B cell (primary cell): ENCODE measurements at regions of chr12 and their contacts with region 1.

Region 1: GRCh38 chr12:123483602-123484248 is 25.8 kb downstream of the SNRNP35 start:
- DNase-seq: no peak
- ATAC-seq: no peak
- H3K4me3 ChIP-seq: no peak overlapping the region
- H3K4me3 Mint-ChIP-seq: no peak overlapping the region
- H3K27ac ChIP-seq: no peak overlapping the region
- H3K27ac Mint-ChIP-seq: peak overlapping the region; percentile 4
- H3K4me1 ChIP-seq: peaks cover 4 to 9% of the 10 kb centered on the region in 2 donors
- H3K4me1 Mint-ChIP-seq: peaks cover 16% of the 10 kb centered on the region
- H3K27me3 ChIP-seq: no peaks in the 10 kb centered on the region
- H3K27me3 Mint-ChIP-seq: no peaks in the 10 kb centered on the region
- CTCF ChIP-seq: no peak

Region 2: GRCh38 chr12:123502163-123502704 is 18.5 kb after region 1 on chr12:
- CTCF ChIA-PET with region 1: no interaction called
- POLR2A ChIA-PET with region 1: interaction called, 13 read pairs
- intact Hi-C with region 1: no loop called
- DNase-seq: no peak
- ATAC-seq: no peak
- H3K4me3 ChIP-seq: no peak overlapping the region
- H3K4me3 Mint-ChIP-seq: no peak overlapping the region
- H3K27ac ChIP-seq: no peak overlapping the region
- H3K27ac Mint-ChIP-seq: no peak overlapping the region
- H3K4me1 ChIP-seq: no peaks in the 10 kb centered on the region
- H3K4me1 Mint-ChIP-seq: no peaks in the 10 kb centered on the region
- H3K27me3 ChIP-seq: no peaks in the 10 kb centered on the region
- H3K27me3 Mint-ChIP-seq: no peaks in the 10 kb centered on the region
- CTCF ChIP-seq: no peak

Region 3: DNA sequence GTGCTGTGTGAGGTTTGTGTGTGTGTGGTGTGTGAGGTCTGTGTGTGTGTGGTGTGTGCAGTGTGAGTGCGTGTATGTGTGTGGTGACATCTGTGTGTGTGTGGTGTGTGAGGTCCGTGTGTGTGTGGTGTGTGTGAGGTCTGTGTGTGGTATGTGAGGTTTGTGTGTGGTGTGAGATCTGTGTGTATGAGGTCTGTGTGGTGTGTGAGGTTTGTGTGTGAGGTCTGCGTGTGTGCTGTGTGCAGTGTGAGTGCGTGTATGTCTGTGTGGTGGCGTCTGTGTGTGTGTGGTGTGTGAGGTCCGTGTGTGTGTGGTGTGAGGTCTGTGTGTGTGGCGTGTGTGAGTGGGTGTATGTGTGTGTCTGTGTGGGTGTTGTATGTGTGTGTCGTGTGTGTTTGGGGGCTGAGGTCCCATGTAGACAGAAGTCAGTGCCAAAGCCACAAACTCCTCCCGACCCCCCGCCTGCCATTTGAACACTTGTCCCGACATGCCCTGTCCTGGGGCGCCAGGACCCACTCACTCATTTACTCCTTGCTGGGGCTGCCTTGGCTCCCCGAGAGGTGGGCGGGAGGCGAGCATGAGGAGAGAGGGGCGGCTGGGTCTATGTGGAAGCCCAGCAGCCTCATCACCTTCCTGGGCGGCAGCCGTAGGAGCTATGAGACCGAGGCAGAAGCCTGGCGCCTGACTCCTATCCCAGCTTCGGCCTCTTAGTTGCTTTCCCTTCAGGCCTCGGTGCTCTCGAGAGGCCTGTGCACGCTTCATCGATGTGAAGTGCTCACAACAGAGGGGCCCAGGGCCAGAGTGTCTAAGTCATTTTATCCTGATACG is 29.3 kb after region 1 on chr12:
- CTCF ChIA-PET with region 1: no interaction called
- POLR2A ChIA-PET with region 1: no interaction called
- intact Hi-C with region 1: no loop called
- DNase-seq: no peak
- ATAC-seq: no peak
- H3K4me3 ChIP-seq: no peak overlapping the region
- H3K4me3 Mint-ChIP-seq: no peak overlapping the region
- H3K27ac ChIP-seq: no peak overlapping the region
- H3K27ac Mint-ChIP-seq: no peak overlapping the region
- H3K4me1 ChIP-seq: no peaks in the 10 kb centered on the region
- H3K4me1 Mint-ChIP-seq: no peaks in the 10 kb centered on the region
- H3K27me3 ChIP-seq: no peaks in the 10 kb centered on the region
- H3K27me3 Mint-ChIP-seq: no peaks in the 10 kb centered on the region
- CTCF ChIP-seq: no peak